ENCODE measurements at regions of chr22 and their contacts with region 1.

Region 1: GRCh38 chr22:29635734-29636357 is 32.4 kb downstream of the NF2 start:
- DNase-seq: no peak
- ATAC-seq: no peak

Region 2: DNA sequence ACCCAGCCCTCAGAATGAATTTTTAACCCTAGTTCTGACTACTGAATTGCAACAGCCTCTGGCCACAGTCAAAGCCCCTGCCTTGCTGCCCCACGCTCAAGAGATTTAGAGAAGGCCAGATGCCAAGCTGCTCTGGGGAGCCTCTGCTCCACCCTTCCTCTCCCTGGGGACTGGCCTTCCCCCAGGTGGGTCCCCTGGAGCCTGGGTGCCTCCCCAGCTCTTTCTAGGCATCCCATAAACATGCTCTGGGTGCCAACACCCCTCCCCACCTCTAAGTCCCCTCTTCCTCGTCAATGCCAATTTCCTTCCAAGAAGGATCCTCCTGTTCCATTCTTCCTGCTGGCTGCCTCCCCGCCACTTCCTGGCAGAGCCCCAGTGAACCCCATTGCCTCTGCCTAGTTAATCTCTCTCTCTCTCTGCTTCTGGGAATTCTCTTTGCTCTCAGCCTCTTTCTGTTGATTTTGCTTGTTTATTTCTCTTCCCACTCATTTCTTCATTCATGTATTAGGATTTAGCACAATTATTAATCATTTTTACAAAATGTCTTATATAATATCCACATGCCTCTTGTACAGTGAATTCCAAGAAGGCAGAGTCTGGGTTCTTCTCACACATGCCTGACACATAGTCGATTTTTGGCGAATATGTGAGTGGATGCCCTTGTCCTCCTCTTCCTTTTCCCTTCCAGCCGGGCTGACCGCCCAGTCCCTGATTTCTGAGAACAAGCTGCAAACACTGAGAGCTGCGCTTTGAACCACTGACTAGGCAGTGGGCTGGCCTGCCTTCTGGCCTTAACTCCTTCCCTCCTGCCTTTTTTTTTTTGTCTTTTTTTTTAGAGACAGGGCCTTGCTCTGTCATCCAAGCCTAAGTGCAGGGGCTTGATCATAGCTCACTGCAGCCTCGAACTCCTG is 148.9 kb after region 1 on chr22:
- intact Hi-C with region 1: no loop called
- DNase-seq: no peak
- ATAC-seq: peak; percentile 35

Region 3: DNA sequence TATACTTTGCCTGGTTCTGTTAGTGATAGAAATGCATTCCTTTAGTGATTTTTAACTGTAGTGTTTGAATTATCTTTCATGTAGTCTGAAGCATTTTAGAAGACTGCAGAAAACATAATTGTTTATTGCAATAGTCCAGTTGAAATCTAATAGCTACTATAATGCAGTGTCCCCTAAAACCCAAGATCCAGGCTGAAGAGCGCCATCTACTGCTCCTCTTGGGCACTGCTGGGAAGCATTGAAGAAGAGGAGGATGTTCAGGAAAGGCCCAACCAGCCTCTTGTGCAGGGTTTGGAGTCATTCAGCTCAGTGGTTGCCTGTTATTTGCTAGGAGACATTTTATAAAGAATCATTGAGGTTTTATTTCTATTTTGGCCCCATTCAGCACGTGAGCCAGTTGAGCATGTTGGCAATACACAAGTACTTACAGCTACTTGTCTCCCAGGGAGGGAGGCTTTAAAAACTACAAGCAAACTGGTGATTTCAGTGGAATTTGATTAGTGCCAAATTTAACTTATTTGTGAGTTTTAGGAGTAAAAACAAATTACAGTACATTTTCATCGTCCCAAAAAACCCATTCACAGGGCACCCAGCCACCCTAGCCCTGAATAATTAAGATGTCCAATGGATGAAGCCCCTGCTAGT is 369.5 kb after region 1 on chr22:
- intact Hi-C with region 1: loop called (anchors 10 kb)
- DNase-seq: no peak
- ATAC-seq: peak; percentile 84

Region 4: GRCh38 chr22:30094804-30095203 is 459.0 kb after region 1 on chr22:
- intact Hi-C with region 1: loop called (anchors 5 kb)
- DNase-seq: no peak
- ATAC-seq: no peak

Measured in Right ventricle myocardium inferior (tissue), 1 donor.